CD14-positive monocyte (primary cell): ENCODE measurements at regions of chr17 and their contacts with region 1.

Region 1: GRCh38 chr17:41937970-41938954 is 7.8 kb downstream of the ODAD4 start:
- DNase-seq: no peak
- H3K4me3 ChIP-seq: no peak overlapping the region
- H3K4me3 Mint-ChIP-seq: no peak overlapping the region
- H3K27ac ChIP-seq: no peak overlapping the region
- H3K27ac Mint-ChIP-seq: no peak overlapping the region
- H3K4me1 ChIP-seq: peaks cover 5 to 6% of the 10 kb centered on the region in 2 donors
- H3K4me1 Mint-ChIP-seq: peaks cover 4% of the 10 kb centered on the region
- H3K27me3 ChIP-seq: no peaks in the 10 kb centered on the region
- H3K27me3 Mint-ChIP-seq: peaks cover 2 to 4% (median 2%) of the 10 kb centered on the region in 3 donors
- CTCF ChIP-seq: no peak

Region 2: GRCh38 chr17:41972571-41973411 is 34.5 kb after region 1 on chr17:
- intact Hi-C with region 1: loop called in 1 of 2 experiments (anchors 5 kb)
- DNase-seq: no peak
- H3K4me3 ChIP-seq: no peak overlapping the region
- H3K4me3 Mint-ChIP-seq: no peak overlapping the region
- H3K27ac ChIP-seq: peak overlapping the region in 1 of 2 donors; percentile 16
- H3K27ac Mint-ChIP-seq: peak overlapping the region in 5 of 7 donors; percentile 37 to 77 (median 53)
- H3K4me1 ChIP-seq: peaks cover 2 to 18% of the 10 kb centered on the region in 2 donors
- H3K4me1 Mint-ChIP-seq: peaks cover 25% of the 10 kb centered on the region
- H3K27me3 ChIP-seq: no peaks in the 10 kb centered on the region
- H3K27me3 Mint-ChIP-seq: no peaks in the 10 kb centered on the region
- CTCF ChIP-seq: no peak

Region 3: DNA sequence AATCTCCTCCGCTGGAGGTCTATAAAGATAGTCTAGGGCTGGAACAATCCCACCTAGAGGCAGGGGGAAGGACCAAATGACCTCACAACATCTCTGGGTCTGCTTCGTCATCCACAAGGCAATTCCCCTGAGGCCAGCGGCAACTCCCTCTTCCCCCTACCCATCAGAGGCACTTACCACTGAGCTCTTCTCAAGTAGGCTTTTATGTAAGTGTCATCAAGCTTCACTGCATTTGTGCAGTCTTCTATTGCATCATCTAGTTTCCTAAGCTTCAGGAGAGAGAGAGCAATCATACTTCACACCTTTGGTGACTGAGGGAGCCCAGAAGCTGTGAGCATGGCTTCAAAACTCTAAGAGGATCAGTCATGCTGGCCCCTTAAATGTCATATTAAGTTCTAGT is 49.4 kb after region 1 on chr17:
- intact Hi-C with region 1: no loop called
- DNase-seq: no peak
- H3K4me3 ChIP-seq: no peak overlapping the region
- H3K4me3 Mint-ChIP-seq: no peak overlapping the region
- H3K27ac ChIP-seq: no peak overlapping the region
- H3K27ac Mint-ChIP-seq: peak overlapping the region in 3 of 7 donors; percentile 1 to 38 (median 22)
- H3K4me1 ChIP-seq: no peaks in the 10 kb centered on the region
- H3K4me1 Mint-ChIP-seq: no peaks in the 10 kb centered on the region
- H3K27me3 ChIP-seq: no peaks in the 10 kb centered on the region
- H3K27me3 Mint-ChIP-seq: peaks cover 0 to 1% (median 0%) of the 10 kb centered on the region in 3 donors
- CTCF ChIP-seq: no peak